CD4-positive, alpha-beta memory T cell (primary cell): ENCODE measurements at regions of chr16 and their contacts with region 1.

Region 1: GRCh38 chr16:30698139-30698815 is 694 bp upstream of the SRCAP start:
- DNase-seq: peak; percentile 99 to 100 (median 100)
- H3K4me3 ChIP-seq: peak overlapping the region; percentile 61 to 71
- H3K4me3 Mint-ChIP-seq: peak overlapping the region; percentile 95 to 99 (median 96)
- H3K27ac ChIP-seq: peak overlapping the region; percentile 100
- H3K27ac Mint-ChIP-seq: peak overlapping the region; percentile 100
- H3K4me1 ChIP-seq: peaks cover 36% of the 10 kb centered on the region
- H3K4me1 Mint-ChIP-seq: peaks cover 22 to 44% (median 32%) of the 10 kb centered on the region in 4 donors
- H3K27me3 ChIP-seq: no peaks in the 10 kb centered on the region
- H3K27me3 Mint-ChIP-seq: peaks cover 0 to 3% of the 10 kb centered on the region in 2 donors

Region 2: DNA sequence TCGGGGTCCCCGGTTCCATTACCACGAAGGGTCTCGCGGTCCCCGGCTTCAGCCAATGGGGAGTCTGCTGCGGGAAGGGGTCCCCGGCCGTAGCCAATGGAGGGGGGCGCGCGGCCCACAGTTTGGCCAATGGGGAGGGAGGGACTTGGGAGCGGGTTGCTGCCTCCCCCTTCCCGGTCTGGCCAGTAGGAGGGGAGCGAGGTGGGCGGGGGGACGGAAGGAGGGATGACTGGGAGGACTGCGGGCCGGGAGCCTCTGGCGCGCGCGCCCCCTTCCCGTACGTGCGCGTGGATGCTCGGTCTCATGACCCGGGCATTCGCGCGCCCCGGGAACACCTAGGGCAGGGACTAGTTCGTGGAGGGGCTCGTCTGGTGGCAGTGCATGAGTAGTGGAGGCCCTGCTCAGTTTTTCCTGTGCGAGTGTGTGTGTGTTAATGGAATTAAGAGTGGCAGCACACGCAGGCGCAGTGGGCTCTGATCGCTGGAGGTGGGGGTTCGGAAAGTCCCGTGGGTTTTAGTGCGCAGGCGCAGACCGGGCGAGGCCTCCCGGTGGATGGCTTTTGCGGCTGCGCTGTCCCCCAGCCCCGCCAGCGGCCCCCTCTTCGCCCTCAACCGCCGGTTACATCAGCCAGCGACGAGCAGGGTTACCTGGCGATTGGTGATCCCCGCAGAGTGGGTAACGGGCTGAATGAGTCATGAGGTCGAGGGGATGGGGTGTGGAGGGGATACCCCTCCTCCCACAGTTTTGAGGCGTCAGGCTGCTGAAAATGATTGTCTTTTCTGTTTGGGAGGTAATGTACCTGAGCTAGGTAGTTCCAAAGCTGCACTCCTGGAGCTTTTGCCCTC is 1874.2 kb before region 1 on chr16:
- CTCF ChIA-PET with region 1: no interaction called
- POLR2A ChIA-PET with region 1: no interaction called
- intact Hi-C with region 1: loop called (anchors 2 kb)
- DNase-seq: peak; percentile 94 to 99 (median 95)
- H3K4me3 ChIP-seq: peak overlapping the region; percentile 85 to 97
- H3K4me3 Mint-ChIP-seq: peak overlapping the region; percentile 93 to 99 (median 96)
- H3K27ac ChIP-seq: peak overlapping the region; percentile 98
- H3K27ac Mint-ChIP-seq: peak overlapping the region; percentile 96 to 100 (median 98)
- H3K4me1 ChIP-seq: peaks cover 32% of the 10 kb centered on the region
- H3K4me1 Mint-ChIP-seq: peaks cover 27 to 58% (median 40%) of the 10 kb centered on the region in 4 donors
- H3K27me3 ChIP-seq: no peaks in the 10 kb centered on the region
- H3K27me3 Mint-ChIP-seq: peaks cover 0 to 5% of the 10 kb centered on the region in 2 donors

Region 3: DNA sequence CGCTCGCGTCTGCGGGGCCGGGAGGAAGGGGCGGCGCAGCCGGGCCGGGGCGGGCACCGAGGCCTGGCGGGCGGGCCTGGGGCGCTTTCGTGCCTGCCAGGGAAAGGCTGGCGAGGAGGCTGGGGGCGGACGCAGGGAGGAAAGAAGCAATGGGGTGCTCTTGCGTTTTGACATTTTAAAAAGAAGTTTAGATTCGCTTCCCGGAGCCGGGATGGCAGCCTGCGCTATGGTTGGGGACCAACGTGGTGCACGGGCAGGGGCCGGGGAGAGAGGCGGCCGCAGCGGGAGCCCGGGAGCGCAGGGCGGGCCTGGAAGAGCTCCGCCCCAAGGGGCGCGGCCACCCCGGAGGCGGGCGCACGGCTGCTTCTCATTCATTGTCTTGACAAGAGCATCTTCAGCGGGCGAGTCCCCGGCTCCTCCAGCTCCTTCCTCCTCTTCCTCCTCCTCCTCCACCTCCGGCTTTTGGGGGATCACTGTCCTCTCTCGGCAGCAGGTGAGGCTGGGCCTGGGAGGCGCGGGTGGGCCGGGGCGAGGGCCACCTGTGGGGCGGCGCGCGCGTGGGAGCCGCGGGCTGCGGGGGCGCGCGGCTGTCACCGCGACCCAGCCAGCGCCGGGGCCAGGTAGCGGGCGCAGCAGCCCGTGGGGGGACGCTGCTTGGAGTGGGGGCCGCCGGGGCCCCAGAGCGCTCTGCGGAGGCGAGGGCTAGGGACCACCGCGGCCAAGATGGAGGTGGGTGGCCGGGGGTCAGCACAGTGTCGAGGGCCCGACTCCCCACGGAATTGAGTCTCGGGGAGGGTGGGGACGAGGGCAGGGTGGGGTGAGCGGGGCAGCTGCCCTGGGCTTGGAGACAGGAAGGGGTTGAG is 514.8 kb before region 1 on chr16 and contains the start of gene CORO1A:
- CTCF ChIA-PET with region 1: no interaction called
- POLR2A ChIA-PET with region 1: no interaction called
- intact Hi-C with region 1: no loop called
- DNase-seq: peak; percentile 80 to 87 (median 84)
- H3K4me3 ChIP-seq: peak within 1 kb of the TSS; percentile 91 to 93
- H3K4me3 Mint-ChIP-seq: peak within 1 kb of the TSS; percentile 94 to 99 (median 98)
- H3K27ac ChIP-seq: peak within 1 kb of the TSS; percentile 77
- H3K27ac Mint-ChIP-seq: peak within 1 kb of the TSS; percentile 96 to 99 (median 97)
- H3K4me1 ChIP-seq: peaks cover 40% of the 10 kb centered on the region
- H3K4me1 Mint-ChIP-seq: peaks cover 15 to 59% (median 29%) of the 10 kb centered on the region in 4 donors
- H3K27me3 ChIP-seq: no peaks in the 10 kb centered on the region
- H3K27me3 Mint-ChIP-seq: no peaks in the 10 kb centered on the region
- total RNA-seq, gene CORO1A: 745 to 769 TPM

Region 4: DNA sequence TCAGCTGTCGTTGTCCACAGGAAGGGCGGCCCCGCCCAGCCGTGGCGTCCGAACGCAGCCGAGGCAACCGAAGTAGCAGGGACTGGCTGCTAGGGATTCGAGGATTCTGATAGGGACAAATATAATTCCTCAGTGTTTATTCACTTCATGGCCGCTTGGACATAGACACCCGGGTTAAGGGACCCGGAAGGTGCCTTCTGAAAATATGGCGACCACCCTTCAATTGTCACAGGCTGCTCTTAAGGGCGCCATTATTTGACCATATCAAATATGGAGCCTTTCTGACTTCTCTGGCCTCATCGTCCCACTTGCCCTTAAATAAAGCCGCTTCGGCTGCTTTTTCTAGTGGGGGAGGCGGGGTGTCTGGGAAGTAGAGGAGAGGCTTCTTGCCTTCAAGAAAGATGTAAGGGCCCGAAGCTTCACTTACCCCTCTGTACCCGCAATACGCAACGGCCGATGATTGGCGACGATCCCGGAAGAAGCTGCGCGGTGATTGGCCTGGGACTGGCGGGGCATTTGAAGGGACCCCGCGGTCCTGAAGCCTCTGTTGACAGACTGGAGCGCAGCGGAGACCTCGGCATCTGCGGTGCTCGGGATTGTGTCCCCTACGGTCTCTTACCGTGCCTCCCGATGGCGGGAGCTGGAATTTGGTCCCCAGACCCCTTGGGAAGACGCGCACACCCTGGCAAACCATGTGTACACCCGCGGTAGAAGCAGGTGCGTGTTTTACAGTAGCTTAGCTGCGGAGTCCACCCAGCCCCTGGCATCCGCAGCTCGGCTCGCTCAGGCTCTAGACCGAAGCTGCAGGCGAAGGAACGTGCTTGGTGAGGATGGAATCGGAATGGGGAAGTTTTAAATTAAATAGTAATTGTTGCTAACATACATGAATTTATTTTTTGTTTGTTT is 126.3 kb before region 1 on chr16 and contains the start of gene ZNF688:
- CTCF ChIA-PET with region 1: no interaction called
- POLR2A ChIA-PET with region 1: interaction called, 7 read pairs
- intact Hi-C with region 1: loop called (anchors 2 kb)
- DNase-seq: peak; percentile 94 to 100 (median 97)
- H3K4me3 ChIP-seq: peak within 1 kb of the TSS; percentile 65 to 71
- H3K4me3 Mint-ChIP-seq: peak within 1 kb of the TSS; percentile 86 to 96 (median 91)
- H3K27ac ChIP-seq: peak within 1 kb of the TSS; percentile 90
- H3K27ac Mint-ChIP-seq: peak within 1 kb of the TSS; percentile 96 to 97 (median 97)
- H3K4me1 ChIP-seq: peaks cover 50% of the 10 kb centered on the region
- H3K4me1 Mint-ChIP-seq: peaks cover 22 to 51% (median 36%) of the 10 kb centered on the region in 4 donors
- H3K27me3 ChIP-seq: no peaks in the 10 kb centered on the region
- H3K27me3 Mint-ChIP-seq: no peaks in the 10 kb centered on the region
- total RNA-seq, gene ZNF688: 21.4 to 22.7 TPM

Region 5: DNA sequence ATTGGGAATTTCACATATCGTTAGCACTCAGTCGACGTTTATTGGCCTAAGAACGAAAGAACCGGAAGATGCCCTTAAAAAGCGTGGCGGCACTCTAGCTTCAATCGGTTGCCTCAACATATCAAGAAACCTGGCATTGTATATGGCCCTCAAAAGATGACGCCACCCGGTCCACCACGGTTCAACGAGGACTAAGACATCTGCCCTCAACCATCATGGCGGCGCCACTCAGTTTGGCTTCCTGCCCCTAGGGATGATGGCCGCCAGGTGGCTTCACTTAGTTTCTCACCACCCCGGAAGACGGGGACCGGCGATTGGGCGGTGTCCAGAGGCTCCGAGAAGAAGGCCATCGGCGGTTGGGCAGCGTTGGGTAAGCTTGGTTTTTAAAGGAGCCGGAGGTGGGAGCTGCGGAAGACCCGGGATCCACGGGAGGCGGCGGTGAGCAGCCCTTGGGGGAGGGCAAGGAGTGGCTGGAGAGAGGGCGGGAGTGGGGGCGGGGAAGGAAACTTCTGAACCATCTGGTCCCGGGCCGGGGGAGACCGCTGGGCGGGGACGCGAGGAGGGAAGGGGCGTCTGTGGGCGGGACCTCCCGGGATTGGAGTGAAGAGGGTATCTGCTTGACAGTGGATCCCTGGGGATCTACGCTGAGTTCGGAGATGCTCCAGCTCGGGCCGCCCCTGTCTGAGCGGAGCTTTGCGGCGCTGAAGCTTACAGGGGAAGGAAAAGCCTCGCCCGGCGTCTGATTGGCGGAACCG is 47.7 kb before region 1 on chr16 and contains the start of gene PRR14:
- CTCF ChIA-PET with region 1: interaction called, 11 read pairs
- POLR2A ChIA-PET with region 1: interaction called, 22 read pairs
- intact Hi-C with region 1: loop called (anchors 1 kb)
- DNase-seq: peak; percentile 96 to 99 (median 97)
- H3K4me3 ChIP-seq: peak within 1 kb of the TSS; percentile 99
- H3K4me3 Mint-ChIP-seq: peak within 1 kb of the TSS; percentile 95 to 100 (median 99)
- H3K27ac ChIP-seq: peak within 1 kb of the TSS; percentile 96
- H3K27ac Mint-ChIP-seq: peak within 1 kb of the TSS; percentile 97 to 100 (median 99)
- H3K4me1 ChIP-seq: peaks cover 20% of the 10 kb centered on the region
- H3K4me1 Mint-ChIP-seq: peaks cover 11 to 32% (median 18%) of the 10 kb centered on the region in 4 donors
- H3K27me3 ChIP-seq: no peaks in the 10 kb centered on the region
- H3K27me3 Mint-ChIP-seq: peaks cover 0 to 2% of the 10 kb centered on the region in 2 donors
- total RNA-seq, gene PRR14: 92.0 to 100 TPM

Region 6: DNA sequence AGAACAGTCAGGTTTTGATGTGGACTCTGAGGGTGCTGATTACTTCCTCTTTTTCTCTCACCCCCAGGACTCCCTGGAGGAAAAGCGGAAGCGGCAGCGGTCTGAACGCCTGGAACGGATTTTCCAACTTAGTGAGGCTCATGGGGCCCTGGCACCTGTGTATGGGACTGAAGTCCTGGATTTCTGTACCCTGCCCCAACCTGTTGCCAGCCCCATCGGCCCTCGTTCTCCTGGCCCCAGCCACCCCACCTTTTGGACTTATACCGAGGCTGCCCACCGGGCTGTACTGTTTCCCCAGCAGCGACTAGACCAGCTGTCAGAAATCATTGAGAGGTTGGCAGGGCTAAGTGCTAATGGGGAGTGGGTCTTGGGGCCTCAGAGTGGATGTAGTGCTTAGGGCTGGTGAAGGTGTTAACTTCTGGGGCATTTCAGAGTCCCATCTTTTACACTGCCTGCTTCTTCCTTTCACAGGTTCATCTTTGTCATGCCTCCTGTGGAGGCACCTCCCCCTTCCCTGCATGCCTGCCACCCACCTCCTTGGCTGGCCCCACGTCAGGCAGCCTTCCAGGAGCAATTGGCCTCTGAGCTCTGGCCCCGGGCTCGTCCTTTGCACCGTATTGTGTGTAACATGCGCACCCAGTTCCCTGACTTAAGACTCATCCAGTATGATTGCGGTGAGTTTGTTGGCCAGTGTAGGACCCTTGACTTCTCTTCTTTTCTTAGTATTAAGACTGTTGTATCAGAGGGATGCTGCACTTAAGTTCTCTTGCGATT is 30.8 kb after region 1 on chr16:
- CTCF ChIA-PET with region 1: no interaction called
- POLR2A ChIA-PET with region 1: no interaction called
- intact Hi-C with region 1: no loop called
- DNase-seq: no peak
- H3K4me3 ChIP-seq: no peak overlapping the region
- H3K4me3 Mint-ChIP-seq: no peak overlapping the region
- H3K27ac ChIP-seq: no peak overlapping the region
- H3K27ac Mint-ChIP-seq: peak overlapping the region in 1 of 7 donors; percentile 73
- H3K4me1 ChIP-seq: no peaks in the 10 kb centered on the region
- H3K4me1 Mint-ChIP-seq: peaks cover 0 to 9% (median 3%) of the 10 kb centered on the region in 4 donors
- H3K27me3 ChIP-seq: no peaks in the 10 kb centered on the region
- H3K27me3 Mint-ChIP-seq: no peaks in the 10 kb centered on the region

Region 7: DNA sequence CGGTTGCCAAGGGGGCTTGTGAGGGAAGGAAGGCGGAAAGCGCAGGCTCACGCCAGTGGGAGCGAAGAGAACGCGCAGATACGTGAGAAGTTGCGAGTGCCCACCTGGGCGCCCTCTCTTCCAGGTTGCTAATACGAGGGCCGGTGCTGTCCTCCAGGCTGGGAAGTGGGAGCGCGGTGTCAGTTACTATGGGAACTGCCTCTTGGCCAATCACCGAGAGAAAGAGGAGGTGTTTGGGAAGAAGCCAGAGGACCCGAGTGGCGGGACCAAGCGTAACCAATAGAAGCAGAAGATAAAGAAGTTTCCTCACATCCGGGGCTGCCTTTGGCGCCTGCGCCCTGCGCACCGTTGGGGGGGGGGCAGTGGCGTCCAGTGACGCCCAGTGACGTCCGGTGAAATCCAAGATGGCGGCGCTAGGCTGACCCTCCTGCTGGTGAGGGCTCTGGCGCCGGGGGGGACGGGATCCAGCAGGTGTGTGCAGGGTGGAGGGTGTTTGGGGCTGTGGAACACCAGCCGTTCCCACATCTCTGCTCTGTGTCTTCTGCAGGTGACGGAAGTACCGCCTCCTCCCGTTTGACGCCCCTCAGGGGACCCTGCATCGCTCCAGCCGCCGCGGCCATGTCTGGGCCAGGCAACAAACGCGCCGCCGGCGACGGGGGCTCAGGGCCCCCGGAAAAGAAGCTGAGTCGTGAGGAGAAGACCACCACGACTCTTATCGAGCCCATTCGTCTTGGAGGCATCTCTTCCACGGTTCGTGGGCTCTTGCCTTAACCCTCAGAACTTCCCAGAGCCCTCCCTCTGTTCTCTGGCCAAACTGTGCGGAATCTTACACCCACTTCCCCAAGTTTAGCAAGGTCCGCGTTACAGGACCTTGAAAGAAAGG is 63.9 kb after region 1 on chr16 and contains the starts of genes CFAP119 and RNF40:
- CTCF ChIA-PET with region 1: no interaction called
- POLR2A ChIA-PET with region 1: interaction called, 3 read pairs
- intact Hi-C with region 1: loop called (anchors 1 kb)
- DNase-seq: peak; percentile 89 to 94 (median 91)
- H3K4me3 ChIP-seq: peak within 1 kb of the TSS; percentile 73 to 97
- H3K4me3 Mint-ChIP-seq: peak within 1 kb of the TSS; percentile 94 to 98 (median 97)
- H3K27ac ChIP-seq: peak within 1 kb of the TSS; percentile 71
- H3K27ac Mint-ChIP-seq: peak within 1 kb of the TSS; percentile 94 to 97 (median 96)
- H3K4me1 ChIP-seq: peaks cover 30% of the 10 kb centered on the region
- H3K4me1 Mint-ChIP-seq: peaks cover 11 to 38% (median 27%) of the 10 kb centered on the region in 4 donors
- H3K27me3 ChIP-seq: no peaks in the 10 kb centered on the region
- H3K27me3 Mint-ChIP-seq: no peaks in the 10 kb centered on the region
- total RNA-seq, gene CFAP119: 2.6 to 3.4 TPM
- total RNA-seq, gene RNF40: 101 to 109 TPM

Region 8: DNA sequence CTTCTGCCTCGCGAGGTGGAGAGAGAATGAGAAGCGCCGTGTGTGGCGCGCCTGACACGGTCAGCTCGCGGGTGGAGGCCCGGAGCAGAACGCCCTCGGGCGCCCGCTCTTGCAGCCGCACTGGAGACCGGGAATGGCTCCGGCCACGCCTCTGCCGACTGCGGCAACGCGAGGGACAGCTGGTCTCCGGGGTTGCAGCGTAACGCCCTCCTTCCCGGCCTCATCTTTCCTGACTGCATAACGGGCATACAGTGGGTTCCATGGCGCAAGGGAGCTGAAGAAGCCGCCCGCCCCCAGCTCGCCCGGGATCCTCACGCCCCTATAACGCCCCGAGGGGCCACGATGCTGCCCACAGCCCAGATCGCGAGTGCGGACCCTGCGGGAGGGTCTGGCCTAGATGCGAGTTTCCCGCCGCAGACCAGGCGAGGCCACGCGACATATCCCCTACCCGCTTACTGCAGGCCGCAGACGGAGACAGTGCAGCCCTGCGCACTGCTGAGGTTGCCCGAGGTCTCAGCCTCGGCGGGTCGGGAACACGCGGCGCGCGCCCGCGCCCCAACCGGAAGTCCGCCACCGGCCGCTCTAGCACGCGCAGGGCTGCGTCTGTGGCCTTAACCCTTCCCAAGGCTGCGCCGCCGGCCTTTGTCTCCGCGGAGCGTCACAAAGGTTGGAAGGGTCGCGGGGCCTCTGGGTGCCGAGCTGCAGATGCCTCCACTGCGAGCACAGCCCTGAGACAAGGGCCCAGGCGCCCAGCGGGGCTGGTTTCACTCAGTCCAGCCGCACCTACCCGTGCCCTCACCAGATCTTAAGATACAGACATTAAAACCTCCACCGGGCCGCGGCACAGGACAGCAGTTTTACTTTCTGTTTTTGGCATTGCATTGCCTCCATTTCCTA is 176.8 kb after region 1 on chr16:
- CTCF ChIA-PET with region 1: no interaction called
- POLR2A ChIA-PET with region 1: interaction called, 3 read pairs
- intact Hi-C with region 1: loop called (anchors 1 kb)
- DNase-seq: peak; percentile 85 to 89 (median 87)
- H3K4me3 ChIP-seq: peak overlapping the region; percentile 89 to 94
- H3K4me3 Mint-ChIP-seq: peak overlapping the region; percentile 92 to 99 (median 97)
- H3K27ac ChIP-seq: peak overlapping the region; percentile 84
- H3K27ac Mint-ChIP-seq: peak overlapping the region; percentile 91 to 99 (median 94)
- H3K4me1 ChIP-seq: peaks cover 23% of the 10 kb centered on the region
- H3K4me1 Mint-ChIP-seq: peaks cover 16 to 50% (median 31%) of the 10 kb centered on the region in 4 donors
- H3K27me3 ChIP-seq: no peaks in the 10 kb centered on the region
- H3K27me3 Mint-ChIP-seq: no peaks in the 10 kb centered on the region

Region 9: DNA sequence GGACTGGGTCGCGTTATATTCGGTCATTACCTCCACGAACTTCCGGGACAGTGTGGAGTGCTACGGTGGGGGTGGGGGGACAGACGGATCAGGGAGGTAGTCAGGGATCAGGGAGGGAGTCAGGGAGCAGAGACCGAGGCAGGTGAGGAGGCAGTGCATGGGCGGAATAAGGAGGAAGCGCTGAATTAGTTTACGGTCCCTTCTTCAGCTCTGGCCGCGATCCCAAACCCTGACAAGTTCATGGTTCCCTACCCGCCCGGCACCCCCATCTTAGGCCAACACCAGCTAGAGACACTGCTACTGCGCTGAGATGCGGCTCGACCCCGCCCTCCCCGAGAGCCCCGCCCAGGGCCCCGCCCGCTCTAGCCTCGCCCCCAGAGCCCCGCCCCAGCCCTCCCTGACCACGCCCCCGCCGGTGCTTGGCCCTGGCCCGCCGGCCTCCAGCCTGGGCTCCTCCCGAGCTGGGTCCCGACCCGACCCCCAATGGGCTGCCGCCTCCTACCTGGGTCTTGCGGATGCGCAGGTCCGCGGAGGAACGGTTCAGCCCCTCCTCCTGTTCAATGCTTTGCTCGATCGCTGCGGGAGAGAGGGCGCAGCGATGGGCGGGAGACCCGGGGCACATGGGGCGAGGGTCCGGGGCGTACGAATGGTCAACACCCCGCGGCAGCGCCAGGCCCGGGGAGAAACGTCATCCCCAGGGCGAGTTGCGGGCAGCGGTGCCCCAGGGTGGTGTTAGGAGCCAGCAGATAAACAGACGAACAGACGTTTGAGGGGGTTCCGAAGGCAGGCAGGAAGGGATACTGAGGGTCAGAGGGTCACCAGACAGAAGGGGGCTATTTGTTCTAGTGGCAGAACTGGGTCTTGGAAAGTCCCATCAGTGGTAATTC is 299.0 kb after region 1 on chr16:
- CTCF ChIA-PET with region 1: no interaction called
- POLR2A ChIA-PET with region 1: no interaction called
- intact Hi-C with region 1: no loop called
- DNase-seq: peak; percentile 59 to 82 (median 66)
- H3K4me3 ChIP-seq: peak overlapping the region; percentile 60 to 69
- H3K4me3 Mint-ChIP-seq: peak overlapping the region; percentile 67 to 86 (median 82)
- H3K27ac ChIP-seq: peak overlapping the region; percentile 47
- H3K27ac Mint-ChIP-seq: peak overlapping the region in 6 of 7 donors; percentile 54 to 89 (median 85)
- H3K4me1 ChIP-seq: peaks cover 11% of the 10 kb centered on the region
- H3K4me1 Mint-ChIP-seq: peaks cover 2 to 6% (median 4%) of the 10 kb centered on the region in 4 donors
- H3K27me3 ChIP-seq: no peaks in the 10 kb centered on the region
- H3K27me3 Mint-ChIP-seq: no peaks in the 10 kb centered on the region